ENCODE measurements at regions of chr14 and their contacts with region 1.

Region 1: GRCh38 chr14:22472935-22473854 is 115.8 kb downstream of the DAD1 start:
- DNase-seq: peak; percentile 42
- H3K4me3 Mint-ChIP-seq: no peak overlapping the region
- H3K27ac Mint-ChIP-seq: no peak overlapping the region
- H3K4me1 Mint-ChIP-seq: peaks cover 17% of the 10 kb centered on the region
- H3K27me3 Mint-ChIP-seq: no peaks in the 10 kb centered on the region
- CTCF ChIP-seq: peak; percentile 15

Region 2: GRCh38 chr14:22314181-22314820 is 158.9 kb before region 1 on chr14:
- CTCF ChIA-PET with region 1: no interaction called
- intact Hi-C with region 1: loop called (anchors 5 kb)
- DNase-seq: peak; percentile 57
- H3K4me3 Mint-ChIP-seq: no peak overlapping the region
- H3K27ac Mint-ChIP-seq: no peak overlapping the region
- H3K4me1 Mint-ChIP-seq: no peaks in the 10 kb centered on the region
- H3K27me3 Mint-ChIP-seq: no peaks in the 10 kb centered on the region
- CTCF ChIP-seq: peak; percentile 41

Region 3: GRCh38 chr14:22386924-22387775 is 86.0 kb before region 1 on chr14:
- CTCF ChIA-PET with region 1: interaction called, 62 read pairs
- intact Hi-C with region 1: loop called (anchors 1 kb)
- DNase-seq: peak; percentile 74
- H3K4me3 Mint-ChIP-seq: no peak overlapping the region
- H3K27ac Mint-ChIP-seq: no peak overlapping the region
- H3K4me1 Mint-ChIP-seq: peaks cover 55% of the 10 kb centered on the region
- H3K27me3 Mint-ChIP-seq: no peaks in the 10 kb centered on the region
- CTCF ChIP-seq: peak; percentile 60

Region 4: DNA sequence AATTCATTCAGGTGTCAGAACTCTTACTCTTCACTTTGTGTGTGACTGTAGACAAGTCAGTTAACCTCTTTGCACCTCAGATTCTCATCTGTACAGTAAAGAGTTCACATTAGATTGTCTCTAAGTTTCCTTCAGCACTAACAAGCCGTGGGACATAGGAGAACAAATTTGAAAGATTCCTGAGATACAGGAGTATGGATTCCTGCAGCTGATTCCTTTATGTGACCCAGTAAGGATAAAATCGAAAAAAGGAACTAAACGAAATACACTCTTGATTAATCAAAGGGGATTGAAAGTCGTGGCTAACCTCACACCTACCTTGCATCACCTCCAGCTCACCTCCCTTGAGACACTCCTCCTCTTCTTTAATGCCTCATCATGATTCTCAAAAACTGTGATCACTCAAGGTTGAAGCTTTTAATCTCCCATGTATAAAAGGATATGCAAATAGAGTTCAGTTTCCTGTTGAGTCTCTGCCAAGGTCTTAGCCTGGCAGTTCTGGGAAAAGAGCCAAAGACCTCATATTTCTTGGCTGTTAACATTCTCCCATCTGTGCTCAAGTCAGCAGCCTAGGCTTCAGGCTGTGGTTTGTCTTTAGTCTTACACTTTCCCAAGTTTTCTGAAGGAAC is 40.7 kb before region 1 on chr14:
- CTCF ChIA-PET with region 1: interaction called, 3 read pairs
- intact Hi-C with region 1: loop called (anchors 5 kb)
- DNase-seq: peak; percentile 65
- H3K4me3 Mint-ChIP-seq: peak overlapping the region; percentile 38
- H3K27ac Mint-ChIP-seq: peak overlapping the region; percentile 88
- H3K4me1 Mint-ChIP-seq: peaks cover 39% of the 10 kb centered on the region
- H3K27me3 Mint-ChIP-seq: no peaks in the 10 kb centered on the region
- CTCF ChIP-seq: no peak

Region 5: DNA sequence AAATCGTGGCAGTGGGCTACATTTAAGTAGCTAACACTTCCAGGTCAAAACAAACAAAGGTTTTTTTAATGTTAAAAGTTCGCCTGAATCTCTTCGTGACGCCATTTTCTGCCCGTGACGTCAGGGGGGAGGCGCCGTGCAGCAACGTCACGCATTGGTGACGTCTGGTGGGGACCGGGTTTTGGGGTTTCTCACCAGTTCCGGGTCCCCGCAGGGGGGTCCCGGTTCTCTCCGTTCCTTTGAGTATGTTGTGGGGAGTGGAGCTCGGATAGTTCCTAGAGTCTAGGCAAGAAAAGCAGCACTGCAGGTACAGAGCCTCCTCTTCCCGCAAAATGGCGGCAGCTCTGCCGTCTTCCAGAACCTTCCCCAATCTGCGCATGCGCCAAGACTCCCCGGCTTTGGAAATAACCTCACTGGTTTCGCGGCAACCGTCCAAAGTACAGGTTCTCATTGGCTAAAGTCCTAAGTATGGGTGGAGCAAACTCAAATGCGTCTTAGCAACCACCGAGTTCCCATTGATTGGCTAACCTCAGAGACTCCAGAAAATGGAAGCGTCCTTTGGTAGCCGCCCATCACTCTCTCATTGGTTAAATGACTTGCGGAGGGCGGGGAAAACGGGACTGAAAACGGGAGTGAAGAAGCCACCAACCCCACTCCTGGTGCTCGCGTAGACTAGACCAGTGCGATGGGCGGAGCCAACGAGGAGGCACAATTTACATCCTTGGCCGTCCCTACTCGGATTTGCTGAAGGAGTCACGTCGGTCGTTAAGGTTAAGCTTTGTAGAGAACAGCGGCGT is 445.8 kb after region 1 on chr14 and contains the start of gene RBM23:
- CTCF ChIA-PET with region 1: no interaction called
- intact Hi-C with region 1: no loop called
- DNase-seq: peak; percentile 96
- H3K4me3 Mint-ChIP-seq: peak within 1 kb of the TSS; percentile 88
- H3K27ac Mint-ChIP-seq: peak within 1 kb of the TSS; percentile 100
- H3K4me1 Mint-ChIP-seq: peaks cover 22% of the 10 kb centered on the region
- H3K27me3 Mint-ChIP-seq: no peaks in the 10 kb centered on the region
- CTCF ChIP-seq: no peak
- total RNA-seq, gene RBM23: 65.3 and 70.9 TPM in 2 replicates

Region 6: GRCh38 chr14:23020143-23021128 is 547.2 kb after region 1 on chr14:
- CTCF ChIA-PET with region 1: no interaction called
- intact Hi-C with region 1: no loop called
- DNase-seq: no peak
- H3K4me3 Mint-ChIP-seq: no peak overlapping the region
- H3K27ac Mint-ChIP-seq: no peak overlapping the region
- H3K4me1 Mint-ChIP-seq: no peaks in the 10 kb centered on the region
- H3K27me3 Mint-ChIP-seq: no peaks in the 10 kb centered on the region
- CTCF ChIP-seq: no peak

Measured in Calu3 (cell line).